ENCODE measurements at regions of chr6 and their contacts with region 1.

Region 1: GRCh38 chr6:85642774-85643536 is at the start of gene SYNCRIP:
- DNase-seq: peak; percentile 95 to 100 (median 99)

Region 2: DNA sequence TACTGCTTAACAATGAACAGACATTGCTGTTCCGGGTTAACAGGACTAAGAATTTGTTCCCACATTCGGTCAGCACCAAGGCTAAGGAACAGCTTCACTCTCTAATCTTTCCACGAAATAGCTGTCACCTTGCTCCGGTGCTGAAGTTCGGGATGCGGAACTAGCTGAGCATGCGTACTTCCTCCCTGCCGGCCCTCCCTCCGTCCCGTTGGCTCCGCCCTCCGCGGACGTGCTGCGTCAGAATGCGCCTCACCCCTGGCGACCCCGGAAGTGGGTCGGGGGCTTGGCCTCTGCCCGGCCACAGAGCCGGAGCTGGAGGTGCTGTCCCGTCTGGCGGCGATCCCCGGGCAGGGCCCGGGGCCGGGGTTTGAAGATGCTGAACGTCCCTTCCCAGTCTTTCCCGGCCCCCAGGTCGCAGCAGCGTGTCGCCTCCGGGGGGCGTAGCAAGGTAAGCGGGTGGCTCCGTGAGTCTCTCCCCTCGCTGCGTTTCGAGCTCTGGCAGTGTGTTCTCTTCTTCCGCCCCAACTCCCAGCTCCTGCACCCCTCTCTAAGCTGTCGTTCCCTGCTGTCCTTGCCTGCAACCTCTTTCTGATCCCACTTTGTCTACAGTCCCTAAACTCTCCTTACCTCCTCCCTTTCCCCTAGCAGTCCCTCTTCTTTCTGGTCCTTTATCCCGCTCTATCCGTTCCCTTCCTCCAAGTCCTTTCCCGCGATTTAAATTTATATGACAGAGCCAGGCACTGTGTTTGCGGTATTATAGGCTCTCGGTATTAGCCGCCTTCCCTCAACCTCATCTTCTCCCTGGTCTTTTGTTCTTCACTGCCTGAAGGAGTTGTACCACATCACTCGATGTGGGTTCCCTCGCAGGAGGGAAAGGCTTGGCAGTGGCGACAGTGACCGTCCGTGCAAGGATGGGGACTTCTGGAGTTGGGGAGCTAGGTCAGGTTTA is 1783.3 kb before region 1 on chr6 and contains the start of gene CYB5R4:
- intact Hi-C with region 1: loop called (anchors 10 kb)
- DNase-seq: peak; percentile 87 to 99 (median 94)

Region 3: GRCh38 chr6:85593438-85594196 is 49.3 kb before region 1 on chr6 and contains the start of gene SNX14:
- intact Hi-C with region 1: loop called (anchors 1 kb)
- DNase-seq: peak; percentile 85 to 98 (median 90)

Region 4: DNA sequence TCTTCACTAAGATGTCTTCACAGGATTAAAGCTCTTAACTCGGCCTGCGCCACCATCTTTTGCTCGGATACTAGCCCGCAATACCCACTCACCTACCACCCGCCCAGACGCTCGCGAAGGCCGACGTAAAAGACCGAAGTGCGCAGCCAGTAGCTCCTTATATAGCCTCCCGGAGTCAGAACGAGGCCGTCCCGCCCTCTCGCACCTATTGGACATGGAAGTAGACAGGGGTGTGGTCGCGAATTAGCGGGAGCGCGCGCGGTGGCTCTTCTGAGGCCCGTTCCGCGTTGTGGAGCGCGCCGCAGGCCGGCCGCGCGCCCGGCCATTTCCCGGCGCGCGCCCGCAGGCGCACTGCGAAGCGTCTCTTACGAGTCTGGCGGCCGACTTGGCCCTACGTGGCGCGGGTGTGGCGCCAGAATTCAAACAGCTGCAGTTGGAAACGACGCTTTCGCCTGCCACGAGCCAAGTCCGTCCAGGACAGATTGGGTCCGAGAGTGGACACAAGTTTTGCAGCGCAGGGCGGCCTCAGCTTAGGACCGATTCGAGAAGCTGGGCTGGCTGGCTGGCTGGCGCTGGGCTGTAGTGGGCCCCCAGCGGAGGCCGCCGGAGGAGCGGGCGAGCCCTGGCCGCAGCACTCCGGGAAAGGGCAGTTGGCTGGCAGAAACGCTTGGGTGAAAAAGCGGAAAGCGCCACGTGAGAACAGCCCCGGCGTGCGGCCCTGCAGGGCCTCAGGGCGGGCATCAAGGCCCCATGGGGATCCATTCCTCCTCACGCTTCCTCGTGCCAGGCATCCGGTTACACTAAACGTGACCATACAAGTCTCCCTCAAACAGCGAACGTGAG is 35.9 kb after region 1 on chr6:
- intact Hi-C with region 1: loop called (anchors 1 kb)
- DNase-seq: peak; percentile 95 to 100 (median 97)

Measured in posterior cingulate gyrus (tissue), 11 donors.